ENCODE measurements at regions of chr5 and their contacts with region 1.

Region 1: GRCh38 chr5:43019614-43020293 is 20.4 kb downstream of the ANXA2R start:
- DNase-seq: peak; percentile 57
- ATAC-seq: peak; percentile 58
- H3K4me3 Mint-ChIP-seq: peak overlapping the region; percentile 80
- H3K27ac Mint-ChIP-seq: no peak overlapping the region
- H3K4me1 Mint-ChIP-seq: peaks cover 53% of the 10 kb centered on the region
- H3K27me3 Mint-ChIP-seq: peaks cover 99% of the 10 kb centered on the region
- CTCF ChIP-seq: no peak

Region 2: DNA sequence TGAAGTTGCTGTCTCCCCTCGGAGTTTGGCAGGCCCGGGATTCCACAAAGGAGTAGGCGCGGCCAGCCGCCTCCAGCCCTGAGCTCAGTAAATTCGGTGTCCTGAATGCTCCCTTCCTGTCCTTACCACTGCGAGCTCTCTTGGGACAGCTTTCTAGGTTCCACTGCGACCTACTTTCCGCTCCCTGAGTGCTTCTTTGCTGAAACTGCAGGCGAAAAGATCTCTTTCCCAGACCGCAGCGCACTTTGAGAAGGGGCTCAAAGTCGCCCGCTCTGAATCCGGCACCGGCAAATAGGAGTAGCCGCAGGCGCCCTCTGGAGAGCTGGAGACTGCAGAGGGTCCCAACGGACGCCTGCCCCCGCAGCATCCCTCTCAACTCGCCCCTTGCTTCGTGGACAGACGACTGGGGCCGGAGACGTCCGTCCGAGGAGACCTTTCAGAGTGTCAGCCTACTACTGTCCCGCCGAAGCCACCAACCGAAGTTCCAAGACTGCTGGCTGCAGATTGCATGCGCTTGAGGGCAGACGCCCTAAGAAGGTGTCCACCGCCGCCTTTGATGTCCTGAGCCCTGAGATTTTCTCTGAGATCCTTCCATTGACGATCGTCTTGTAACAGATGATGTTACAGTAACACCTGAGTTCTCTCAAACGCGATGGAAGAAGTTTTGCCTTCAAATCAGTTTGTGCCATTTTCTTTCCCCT is 75.7 kb before region 1 on chr5:
- CTCF ChIA-PET with region 1: no interaction called
- POLR2A ChIA-PET with region 1: no interaction called
- DNase-seq: peak; percentile 42
- ATAC-seq: peak; percentile 90
- H3K4me3 Mint-ChIP-seq: peak overlapping the region; percentile 64
- H3K27ac Mint-ChIP-seq: no peak overlapping the region
- H3K4me1 Mint-ChIP-seq: peaks cover 23% of the 10 kb centered on the region
- H3K27me3 Mint-ChIP-seq: peaks cover 31% of the 10 kb centered on the region
- CTCF ChIP-seq: no peak

Region 3: DNA sequence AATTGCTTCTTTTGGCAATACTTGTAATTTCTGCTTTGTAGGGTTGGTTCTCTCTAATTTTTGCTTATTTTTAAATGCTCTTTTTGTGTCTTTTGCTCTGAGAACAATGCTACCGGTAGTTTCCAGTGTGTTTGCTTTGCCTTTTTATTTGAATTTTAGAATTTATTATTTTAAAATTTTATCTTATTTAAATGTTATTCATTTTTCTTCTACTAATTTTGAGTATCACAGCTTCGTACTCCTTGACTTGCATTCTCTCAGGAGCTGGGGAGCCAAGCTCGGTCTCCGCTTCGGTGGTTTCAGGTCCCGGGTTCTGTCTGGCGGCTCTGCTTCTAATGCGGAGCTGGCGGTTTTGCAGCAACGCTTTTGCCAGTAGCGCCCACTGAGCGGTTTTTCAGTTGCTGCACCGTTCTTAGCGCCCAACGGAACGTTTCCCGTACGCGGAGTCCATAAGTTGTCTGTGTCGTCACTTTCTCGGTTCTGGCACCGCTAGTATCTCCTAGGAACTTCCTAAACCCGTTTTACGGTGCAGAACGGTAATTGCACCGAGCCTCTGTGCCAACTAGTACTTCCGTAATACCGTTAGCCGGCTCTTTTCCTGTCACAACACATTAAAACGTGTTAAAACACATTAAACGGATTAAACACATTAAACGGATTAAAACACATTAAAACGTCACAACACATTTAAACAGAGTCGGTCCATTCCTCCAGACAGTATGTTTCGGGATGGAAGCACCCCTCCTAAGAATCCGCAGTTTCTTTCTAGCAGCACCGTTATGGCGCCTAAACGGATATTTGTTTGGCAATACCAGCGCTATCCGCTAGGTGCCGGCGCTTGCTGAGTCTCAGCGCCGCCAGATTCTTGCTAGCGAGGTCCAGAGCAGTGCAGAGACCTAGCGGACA is 25.3 kb before region 1 on chr5:
- CTCF ChIA-PET with region 1: interaction called, 14 read pairs
- POLR2A ChIA-PET with region 1: interaction called, 5 read pairs
- DNase-seq: peak; percentile 90
- ATAC-seq: peak; percentile 79
- H3K4me3 Mint-ChIP-seq: peak overlapping the region; percentile 56
- H3K27ac Mint-ChIP-seq: no peak overlapping the region
- H3K4me1 Mint-ChIP-seq: peaks cover 35% of the 10 kb centered on the region
- H3K27me3 Mint-ChIP-seq: peaks cover 100% of the 10 kb centered on the region
- CTCF ChIP-seq: peak; percentile 83

Region 4: GRCh38 chr5:43008369-43009153 is 11.2 kb before region 1 on chr5:
- CTCF ChIA-PET with region 1: interaction called, 11 read pairs
- POLR2A ChIA-PET with region 1: interaction called, 3 read pairs
- DNase-seq: peak; percentile 90
- ATAC-seq: peak; percentile 74
- H3K4me3 Mint-ChIP-seq: peak overlapping the region; percentile 78
- H3K27ac Mint-ChIP-seq: peak overlapping the region; percentile 92
- H3K4me1 Mint-ChIP-seq: peaks cover 34% of the 10 kb centered on the region
- H3K27me3 Mint-ChIP-seq: peaks cover 90% of the 10 kb centered on the region
- CTCF ChIP-seq: no peak

Region 5: GRCh38 chr5:43040287-43041098 is 20.7 kb after region 1 on chr5 and contains the start of gene ANXA2R:
- CTCF ChIA-PET with region 1: interaction called, 11 read pairs
- POLR2A ChIA-PET with region 1: no interaction called
- DNase-seq: peak; percentile 91
- ATAC-seq: peak; percentile 47
- H3K4me3 Mint-ChIP-seq: peak within 1 kb of the TSS; percentile 74
- H3K27ac Mint-ChIP-seq: no peak within 1 kb of the TSS
- H3K4me1 Mint-ChIP-seq: peaks cover 63% of the 10 kb centered on the region
- H3K27me3 Mint-ChIP-seq: peaks cover 95% of the 10 kb centered on the region
- CTCF ChIP-seq: peak; percentile 78
- total RNA-seq, gene ANXA2R: 0.72 to 1.1 TPM (median 0.96 TPM) in 3 replicates